GM10248 (cell line): ENCODE measurements at regions of chr11 and their contacts with region 1.

Region 1: DNA sequence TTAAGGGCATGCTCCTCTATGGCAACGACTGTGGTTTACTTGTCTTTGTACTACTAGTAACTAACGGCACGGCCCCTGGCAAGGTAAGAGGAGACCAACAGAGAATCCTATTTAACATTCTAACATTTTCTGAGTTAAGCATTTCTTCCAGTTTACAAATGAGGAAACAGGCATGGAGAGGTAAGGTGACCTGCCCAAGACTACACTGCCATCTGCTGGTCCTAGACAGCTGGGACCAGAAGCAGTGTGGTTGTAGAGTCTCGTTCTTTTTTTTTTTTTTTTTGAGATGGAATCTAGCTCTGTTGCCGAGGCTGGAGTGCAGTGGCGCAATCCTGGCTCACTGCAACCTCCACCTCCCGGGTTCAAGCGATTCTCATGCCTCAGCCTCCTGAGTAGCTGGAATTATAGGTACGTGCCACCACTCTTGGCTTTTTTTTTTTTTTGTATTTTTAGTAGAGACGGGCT is 5.3 kb upstream of the RAPSN start:
- DNase-seq: peak; percentile 82
- CTCF ChIP-seq: peak; percentile 89

Region 2: GRCh38 chr11:47426061-47426956 is 27.9 kb before region 1 on chr11 and contains the start of gene PSMC3:
- CTCF ChIA-PET with region 1: interaction called, 12 read pairs
- POLR2A ChIA-PET with region 1: no interaction called
- DNase-seq: peak; percentile 97
- CTCF ChIP-seq: no peak

Region 3: DNA sequence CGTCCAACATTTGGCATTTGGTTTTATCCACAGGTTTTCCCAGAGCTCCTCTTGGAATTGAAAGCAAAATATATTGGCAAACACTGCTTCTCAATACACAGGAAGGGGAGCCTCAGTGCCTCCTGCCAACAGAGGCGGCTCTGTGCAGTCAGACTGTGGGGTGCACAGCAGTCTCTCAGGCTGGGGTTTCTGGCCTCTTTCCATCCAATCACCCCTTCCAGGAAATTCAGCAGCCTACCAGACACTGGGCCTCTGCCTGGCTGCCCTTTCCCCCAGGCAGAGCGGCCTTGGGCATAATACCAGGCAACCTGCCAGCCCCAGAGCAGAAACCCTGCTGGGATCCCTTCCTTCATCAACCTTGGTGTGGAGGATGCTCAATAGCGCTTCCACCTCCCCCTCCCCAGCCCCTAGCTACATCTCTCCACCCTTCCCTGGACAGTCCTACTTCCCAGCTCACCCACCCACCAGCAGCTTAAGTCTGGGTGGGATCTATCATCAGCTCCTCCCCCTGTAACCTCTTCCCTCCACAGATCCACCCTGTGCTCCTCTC is 12.6 kb after region 1 on chr11:
- CTCF ChIA-PET with region 1: interaction called, 29 read pairs
- POLR2A ChIA-PET with region 1: no interaction called
- DNase-seq: no peak
- CTCF ChIP-seq: no peak

Region 4: DNA sequence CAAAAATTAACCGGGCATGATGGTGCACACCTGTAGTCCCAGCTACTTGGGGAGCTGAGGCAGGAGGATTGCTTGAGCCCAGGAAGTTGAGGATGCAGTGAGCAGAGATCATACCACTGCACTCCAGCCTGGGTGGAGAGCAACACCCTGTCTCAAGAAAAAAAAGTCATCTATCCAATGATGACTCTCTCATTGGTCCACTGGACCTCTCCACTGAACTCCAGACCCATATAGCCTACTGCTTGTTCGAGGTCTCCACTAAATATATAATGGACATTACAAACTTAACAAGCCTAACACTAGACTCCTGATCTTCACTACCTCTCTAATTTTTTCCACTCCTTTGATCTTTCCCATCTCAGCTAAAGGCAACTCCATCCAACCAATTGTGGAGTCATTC is 221.6 kb after region 1 on chr11:
- CTCF ChIA-PET with region 1: no interaction called
- POLR2A ChIA-PET with region 1: no interaction called
- DNase-seq: no peak
- CTCF ChIP-seq: no peak